Activated naive CD4-positive, alpha-beta T cell treated with anti-CD3 and anti-CD28 coated beads for 36 hours (primary cell): ENCODE measurements at regions of chr21 and their contacts with region 1.

Region 1: DNA sequence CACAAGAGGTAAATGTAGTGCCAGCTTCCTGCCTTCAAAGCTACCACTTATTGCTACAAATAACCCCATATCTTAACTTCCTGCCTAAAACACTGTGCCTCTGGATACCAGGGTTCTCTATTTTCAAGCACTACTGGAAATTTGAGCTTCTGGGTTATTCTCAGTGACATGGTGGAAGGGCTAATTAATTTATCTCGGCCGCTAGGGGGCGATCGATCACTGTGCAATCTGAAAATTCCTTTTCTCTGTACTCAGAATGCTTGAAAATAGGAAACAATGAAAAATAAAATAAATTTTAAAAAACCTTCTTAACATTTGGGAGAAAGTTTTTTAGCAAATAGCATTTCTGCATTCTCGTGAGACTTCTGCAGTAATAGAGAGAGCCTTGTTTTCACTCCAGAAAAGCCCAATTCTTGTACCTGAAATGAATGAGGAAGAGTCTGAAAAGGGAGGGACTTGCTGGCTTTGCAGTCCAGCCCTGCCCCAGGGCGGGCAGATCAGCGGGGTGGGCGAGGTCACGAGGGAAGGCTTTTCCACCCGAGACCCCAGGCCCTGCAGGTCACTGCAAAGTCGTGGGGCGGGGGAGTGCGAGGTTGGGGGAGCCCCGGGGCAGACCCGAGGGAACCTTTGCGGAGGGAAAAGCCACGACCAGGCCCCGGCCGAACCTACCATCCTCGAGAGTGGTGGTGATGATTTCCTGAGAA is 276.7 kb downstream of the PCP4 start:
- DNase-seq: peak; percentile 61
- H3K4me3 Mint-ChIP-seq: no peak overlapping the region
- H3K27ac Mint-ChIP-seq: no peak overlapping the region
- H3K4me1 Mint-ChIP-seq: no peaks in the 10 kb centered on the region
- H3K27me3 Mint-ChIP-seq: no peaks in the 10 kb centered on the region

Region 2: DNA sequence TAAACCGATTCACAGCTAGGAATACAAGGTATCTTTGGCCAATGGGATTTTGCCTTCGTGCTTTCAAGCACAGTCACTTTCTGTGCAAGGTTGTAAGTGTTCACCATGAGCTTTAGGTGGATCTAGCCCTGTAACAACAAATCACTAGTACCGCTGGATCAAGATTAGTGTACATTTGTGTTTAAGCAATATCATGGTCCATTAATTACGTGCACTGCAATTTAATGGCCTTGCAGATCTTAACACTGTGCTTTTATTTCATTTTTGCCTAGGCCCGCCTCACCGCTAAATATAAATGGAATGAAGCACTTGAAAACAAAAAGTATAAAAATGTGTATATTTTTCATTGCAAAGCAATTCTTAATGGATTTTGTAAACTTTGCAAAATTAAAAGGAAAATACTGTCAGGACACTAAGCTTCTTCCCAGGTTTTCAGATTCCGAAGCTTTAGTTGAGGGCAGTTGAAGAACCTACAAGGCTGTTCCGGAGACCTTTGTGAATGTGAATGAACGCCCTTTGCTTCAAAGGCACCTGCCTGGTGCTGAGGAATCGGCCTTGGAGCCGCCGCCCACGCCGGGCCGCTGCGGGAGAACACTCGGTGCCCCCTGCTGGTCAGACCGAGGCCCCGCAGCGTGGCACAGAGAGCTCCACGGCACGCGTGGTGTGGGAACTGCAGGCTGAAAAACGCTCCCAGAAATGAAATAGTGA is 242.1 kb after region 1 on chr21:
- CTCF ChIA-PET with region 1: interaction called, 10 read pairs
- intact Hi-C with region 1: loop called (anchors 2 kb)
- DNase-seq: peak; percentile 53
- H3K4me3 Mint-ChIP-seq: no peak overlapping the region
- H3K27ac Mint-ChIP-seq: no peak overlapping the region
- H3K4me1 Mint-ChIP-seq: no peaks in the 10 kb centered on the region
- H3K27me3 Mint-ChIP-seq: peaks cover 9% of the 10 kb centered on the region